Activated T-helper 1 cell treated with anti-CD3 and anti-CD28 coated beads, Interleukin-12 subunit alpha, Interleukin-12 subunit beta, Interleukin-2, Interleukin-4 antibody, amounts not matched to agents 30 ng/mL and 10 ng/mL and 1 ng/mL, durations not matched to agents 14 hours and 24 hours and 36 hours (primary cell): ENCODE measurements at regions of chr20 and their contacts with region 1.

Region 1: GRCh38 chr20:266596-267562 is 9.4 kb downstream of the DEFB132 start:
- DNase-seq: peak; percentile 78
- H3K4me3 Mint-ChIP-seq: peak overlapping the region; percentile 76
- H3K27ac Mint-ChIP-seq: peak overlapping the region; percentile 68
- H3K4me1 Mint-ChIP-seq: peaks cover 11% of the 10 kb centered on the region
- H3K27me3 Mint-ChIP-seq: peaks cover 19% of the 10 kb centered on the region

Region 2: DNA sequence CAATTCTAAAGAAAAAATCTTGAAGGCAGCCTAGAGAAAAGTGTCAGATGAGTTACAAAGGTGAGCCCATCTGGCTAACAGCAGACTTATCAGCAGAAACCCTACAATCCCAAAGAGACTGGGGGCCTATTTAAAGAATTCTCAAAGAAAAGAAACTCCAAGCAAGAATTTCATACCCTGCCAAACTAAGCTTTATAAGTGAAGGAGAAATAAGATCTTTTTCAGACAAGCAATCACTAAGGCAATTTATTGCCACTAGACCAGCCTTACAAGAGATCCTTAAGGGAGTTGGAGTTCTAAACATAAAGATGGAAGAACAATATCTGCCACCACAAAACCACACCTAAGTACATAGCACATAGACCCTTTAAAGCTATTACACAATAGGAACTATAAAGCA is 149.4 kb before region 1 on chr20:
- intact Hi-C with region 1: loop called (anchors 5 kb)
- DNase-seq: no peak
- H3K4me3 Mint-ChIP-seq: no peak overlapping the region
- H3K27ac Mint-ChIP-seq: no peak overlapping the region
- H3K4me1 Mint-ChIP-seq: no peaks in the 10 kb centered on the region
- H3K27me3 Mint-ChIP-seq: peaks cover 26% of the 10 kb centered on the region

Region 3: GRCh38 chr20:145877-146276 is 121.0 kb before region 1 on chr20:
- intact Hi-C with region 1: loop called (anchors 5 kb)
- DNase-seq: no peak
- H3K4me3 Mint-ChIP-seq: no peak overlapping the region
- H3K27ac Mint-ChIP-seq: no peak overlapping the region
- H3K4me1 Mint-ChIP-seq: no peaks in the 10 kb centered on the region
- H3K27me3 Mint-ChIP-seq: peaks cover 37% of the 10 kb centered on the region

Region 4: DNA sequence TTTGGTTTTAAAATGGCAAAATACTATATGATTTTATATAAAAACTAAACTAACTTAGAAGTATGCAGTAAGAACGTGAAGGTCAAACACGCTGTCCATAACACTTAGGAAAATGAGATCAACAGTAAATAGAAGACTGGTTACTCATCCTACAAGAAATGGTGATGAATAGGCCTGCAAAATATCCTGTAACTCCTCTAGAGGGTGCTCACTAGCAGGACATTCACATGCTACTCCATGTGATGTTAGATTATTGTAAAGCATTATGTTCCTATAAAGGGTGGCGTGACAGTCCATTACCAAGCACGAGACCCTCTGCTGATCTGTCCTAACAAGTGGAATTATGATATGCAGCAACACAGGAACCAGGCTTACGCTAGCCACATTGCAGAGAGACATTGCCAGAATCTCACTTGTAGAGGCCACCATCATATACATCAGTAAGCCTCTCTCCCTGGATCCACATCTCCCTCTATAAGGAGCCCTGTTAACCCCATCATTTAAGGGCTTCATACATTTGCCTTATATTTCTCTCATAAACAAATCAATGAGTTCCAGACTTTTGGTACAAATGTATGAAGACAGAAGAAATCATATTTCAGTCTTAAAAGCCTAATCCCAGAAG is 57.8 kb before region 1 on chr20:
- intact Hi-C with region 1: loop called (anchors 1 kb)
- DNase-seq: peak; percentile 8
- H3K4me3 Mint-ChIP-seq: no peak overlapping the region
- H3K27ac Mint-ChIP-seq: no peak overlapping the region
- H3K4me1 Mint-ChIP-seq: no peaks in the 10 kb centered on the region
- H3K27me3 Mint-ChIP-seq: peaks cover 10% of the 10 kb centered on the region

Region 5: DNA sequence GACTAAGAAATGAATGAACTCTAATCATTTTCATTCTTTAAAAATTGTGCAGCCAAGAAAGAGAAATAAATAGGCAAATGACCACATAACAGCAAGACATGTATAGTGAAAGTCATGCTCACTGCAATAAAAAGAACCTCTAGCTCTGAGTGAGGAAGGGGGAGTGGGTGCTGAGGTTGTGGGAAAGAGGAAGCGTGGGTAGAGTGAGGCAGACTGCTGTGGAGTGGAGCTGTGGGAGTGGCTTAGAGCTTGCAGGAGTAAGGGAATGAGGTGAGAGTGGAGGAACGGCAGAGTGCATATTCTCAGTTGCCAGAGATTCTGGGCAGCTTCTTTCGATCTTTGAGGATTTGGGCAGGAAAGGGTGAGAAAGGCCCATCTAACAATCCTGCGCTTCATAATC is 29.4 kb before region 1 on chr20:
- intact Hi-C with region 1: loop called (anchors 1 kb)
- DNase-seq: peak; percentile 29
- H3K4me3 Mint-ChIP-seq: peak overlapping the region; percentile 67
- H3K27ac Mint-ChIP-seq: peak overlapping the region; percentile 82
- H3K4me1 Mint-ChIP-seq: peaks cover 25% of the 10 kb centered on the region
- H3K27me3 Mint-ChIP-seq: peaks cover 4% of the 10 kb centered on the region

Region 6: GRCh38 chr20:330233-331149 is 63.6 kb after region 1 on chr20:
- intact Hi-C with region 1: loop called (anchors 1 kb)
- DNase-seq: peak; percentile 44
- H3K4me3 Mint-ChIP-seq: no peak overlapping the region
- H3K27ac Mint-ChIP-seq: no peak overlapping the region
- H3K4me1 Mint-ChIP-seq: peaks cover 18% of the 10 kb centered on the region
- H3K27me3 Mint-ChIP-seq: peaks cover 3% of the 10 kb centered on the region